ENCODE measurements at regions of chr1 and their contacts with region 1.

Region 1: DNA sequence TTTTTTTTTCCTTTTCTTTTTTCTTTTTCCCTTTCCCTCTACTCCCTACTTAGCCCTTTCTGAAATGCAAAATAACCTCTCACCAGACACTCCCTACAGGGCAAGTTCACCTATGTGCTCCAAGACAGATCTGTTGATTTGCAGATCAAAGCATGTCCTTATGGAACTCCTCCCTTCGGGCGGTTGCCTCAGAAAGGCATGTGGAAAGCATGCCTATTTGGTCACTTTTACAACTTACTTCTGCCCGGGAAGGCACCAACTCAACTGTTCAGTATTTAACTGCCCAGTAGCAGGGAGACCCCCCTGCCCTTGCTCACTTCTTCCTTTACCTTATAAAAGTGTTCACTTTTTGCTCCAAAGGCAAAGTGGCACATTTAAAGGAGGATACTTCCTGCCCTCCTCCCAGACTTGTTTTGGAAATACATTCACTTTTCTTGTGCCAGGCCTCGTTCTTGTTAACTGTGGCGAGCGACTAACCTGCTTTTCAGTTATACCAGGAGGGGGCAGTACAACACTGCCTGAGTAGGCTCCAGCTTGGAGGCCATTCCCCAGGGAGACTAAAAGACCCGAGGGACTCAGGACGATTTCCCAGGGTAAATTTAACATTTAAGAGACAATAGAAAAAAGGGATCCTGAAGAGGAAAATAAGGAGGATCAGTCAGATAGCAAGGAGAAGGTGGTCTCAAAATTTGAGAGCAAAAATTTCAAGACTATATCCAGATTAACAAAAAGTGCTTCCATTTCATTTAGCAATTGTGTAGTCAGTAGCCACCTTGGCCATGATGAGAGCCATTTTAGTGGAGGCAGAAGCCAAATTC is 12.3 kb upstream of the SLAMF7 start:
- DNase-seq: peak; percentile 90
- H3K4me3 Mint-ChIP-seq: no peak overlapping the region
- H3K27ac Mint-ChIP-seq: no peak overlapping the region
- H3K4me1 Mint-ChIP-seq: peaks cover 22% of the 10 kb centered on the region
- H3K27me3 Mint-ChIP-seq: no peaks in the 10 kb centered on the region

Region 2: GRCh38 chr1:160362168-160362957 is 364.3 kb before region 1 on chr1:
- intact Hi-C with region 1: no loop called
- DNase-seq: no peak
- H3K4me3 Mint-ChIP-seq: no peak overlapping the region
- H3K27ac Mint-ChIP-seq: no peak overlapping the region
- H3K4me1 Mint-ChIP-seq: no peaks in the 10 kb centered on the region
- H3K27me3 Mint-ChIP-seq: no peaks in the 10 kb centered on the region

Region 3: GRCh38 chr1:160711602-160712311 is 14.9 kb before region 1 on chr1 and contains the start of gene CD48:
- intact Hi-C with region 1: loop called (anchors 1 kb)
- DNase-seq: peak; percentile 85
- H3K4me3 Mint-ChIP-seq: no peak within 1 kb of the TSS
- H3K27ac Mint-ChIP-seq: no peak within 1 kb of the TSS
- H3K4me1 Mint-ChIP-seq: peaks cover 26% of the 10 kb centered on the region
- H3K27me3 Mint-ChIP-seq: no peaks in the 10 kb centered on the region
- total RNA-seq, gene CD48: 206 and 208 TPM in 2 replicates

Region 4: GRCh38 chr1:160748181-160748877 is 21.6 kb after region 1 on chr1:
- intact Hi-C with region 1: no loop called
- DNase-seq: no peak
- H3K4me3 Mint-ChIP-seq: no peak overlapping the region
- H3K27ac Mint-ChIP-seq: no peak overlapping the region
- H3K4me1 Mint-ChIP-seq: peaks cover 76% of the 10 kb centered on the region
- H3K27me3 Mint-ChIP-seq: no peaks in the 10 kb centered on the region

Region 5: GRCh38 chr1:160768295-160768657 is 41.6 kb after region 1 on chr1:
- intact Hi-C with region 1: loop called (anchors 1 kb)
- DNase-seq: peak; percentile 95
- H3K4me3 Mint-ChIP-seq: peak overlapping the region; percentile 88
- H3K27ac Mint-ChIP-seq: peak overlapping the region; percentile 98
- H3K4me1 Mint-ChIP-seq: peaks cover 33% of the 10 kb centered on the region
- H3K27me3 Mint-ChIP-seq: peaks cover 2% of the 10 kb centered on the region

Region 6: DNA sequence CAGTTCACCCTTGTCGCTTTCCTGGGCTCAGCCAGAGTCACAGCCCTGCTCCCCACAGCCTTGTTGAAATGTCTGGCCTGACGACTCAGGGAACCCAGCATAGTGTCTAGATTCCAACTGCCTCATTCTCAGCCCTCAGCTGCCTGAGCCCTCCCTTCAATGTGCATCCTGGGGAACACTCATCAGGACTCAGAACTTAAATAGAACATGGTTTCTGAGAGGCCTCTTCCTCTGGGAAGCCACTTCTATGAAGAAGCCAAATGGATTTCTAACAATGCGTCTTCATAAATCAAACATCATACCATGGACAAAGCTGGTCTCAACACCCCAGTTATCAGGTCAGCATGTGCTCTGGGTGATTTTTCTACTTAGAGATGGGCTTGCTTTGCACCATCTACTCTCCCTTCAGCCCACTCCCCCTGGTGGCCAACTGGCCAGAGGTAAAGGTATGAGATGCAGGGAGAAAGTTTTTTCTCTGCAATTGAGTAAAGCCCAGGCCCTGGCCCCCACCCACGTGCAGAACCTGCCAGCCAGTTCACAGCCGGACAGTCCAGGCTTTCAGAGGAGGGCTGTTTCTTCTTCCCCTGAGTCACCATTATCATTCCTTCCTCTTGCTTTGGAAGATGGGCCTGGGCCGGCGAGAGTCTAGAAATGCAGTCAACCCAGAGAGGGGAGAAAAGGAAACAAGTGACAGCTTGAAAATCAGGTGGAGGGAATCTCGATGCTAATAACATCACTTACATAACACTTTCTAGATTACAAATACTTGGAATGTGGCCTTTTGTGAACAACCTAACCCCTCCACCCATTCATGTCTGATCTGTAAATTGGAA is 103.8 kb after region 1 on chr1:
- intact Hi-C with region 1: loop called (anchors 2 kb)
- DNase-seq: peak; percentile 93
- H3K4me3 Mint-ChIP-seq: no peak overlapping the region
- H3K27ac Mint-ChIP-seq: peak overlapping the region; percentile 22
- H3K4me1 Mint-ChIP-seq: peaks cover 13% of the 10 kb centered on the region
- H3K27me3 Mint-ChIP-seq: no peaks in the 10 kb centered on the region

Region 7: GRCh38 chr1:160877221-160877620 is 150.5 kb after region 1 on chr1:
- intact Hi-C with region 1: loop called (anchors 5 kb)
- DNase-seq: peak; percentile 71
- H3K4me3 Mint-ChIP-seq: no peak overlapping the region
- H3K27ac Mint-ChIP-seq: no peak overlapping the region
- H3K4me1 Mint-ChIP-seq: peaks cover 15% of the 10 kb centered on the region
- H3K27me3 Mint-ChIP-seq: peaks cover 7% of the 10 kb centered on the region

Region 8: GRCh38 chr1:160951443-160952128 is 224.9 kb after region 1 on chr1:
- intact Hi-C with region 1: loop called (anchors 1 kb)
- DNase-seq: peak; percentile 91
- H3K4me3 Mint-ChIP-seq: no peak overlapping the region
- H3K27ac Mint-ChIP-seq: no peak overlapping the region
- H3K4me1 Mint-ChIP-seq: peaks cover 6% of the 10 kb centered on the region
- H3K27me3 Mint-ChIP-seq: peaks cover 9% of the 10 kb centered on the region